ENCODE measurements at regions of chr3 and their contacts with region 1.

Region 1: DNA sequence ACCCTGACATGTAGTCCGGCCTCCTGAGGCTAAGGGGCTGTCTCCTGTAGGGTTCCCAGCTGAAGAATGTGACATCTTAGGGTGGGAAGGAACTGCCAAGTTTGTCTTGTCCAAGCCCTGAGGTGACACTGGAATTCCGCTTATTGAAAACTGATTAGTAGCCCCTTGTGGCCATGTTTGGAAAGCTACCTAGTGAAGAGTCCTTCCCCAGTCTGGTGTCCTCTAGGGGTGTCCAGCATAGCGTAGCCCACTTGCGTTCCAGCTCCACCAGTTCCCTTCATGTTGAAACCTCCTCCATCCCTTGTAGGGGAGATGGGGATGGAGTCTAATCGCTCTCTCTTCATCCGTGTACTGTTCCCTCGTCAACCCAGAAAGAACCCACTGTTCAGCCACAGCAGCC is 79.5 kb downstream of the CHDH start:
- DNase-seq: no peak
- H3K4me3 ChIP-seq: no peak overlapping the region
- H3K27ac ChIP-seq: no peak overlapping the region
- H3K4me1 ChIP-seq: peaks cover 0 to 12% (median 5%) of the 10 kb centered on the region in 4 experiments; a peak in 3 of 7 replicates
- H3K27me3 ChIP-seq: no peaks in the 10 kb centered on the region
- CTCF ChIP-seq: peak; percentile 9 to 26 (median 20)
- EP300 ChIP-seq: no peak
- POLR2A ChIP-seq: no peak
- RAD21 ChIP-seq: peak in 1 of 2 experiments; percentile 3; a peak in 1 of 4 replicates

Region 2: GRCh38 chr3:53721187-53722119 is 45.3 kb before region 1 on chr3:
- CTCF ChIA-PET with region 1: interaction called, 10 read pairs
- POLR2A ChIA-PET with region 1: no interaction called
- DNase-seq: no peak
- H3K4me3 ChIP-seq: no peak overlapping the region
- H3K27ac ChIP-seq: no peak overlapping the region
- H3K4me1 ChIP-seq: peaks cover 0 to 3% (median 0%) of the 10 kb centered on the region in 4 experiments; a peak in 1 of 7 replicates
- H3K27me3 ChIP-seq: no peaks in the 10 kb centered on the region
- CTCF ChIP-seq: peak in 1 of 3 experiments; percentile 23; a peak in 1 of 4 replicates
- EP300 ChIP-seq: no peak
- POLR2A ChIP-seq: no peak
- RAD21 ChIP-seq: peak in 1 of 2 experiments; percentile 23; a peak in 2 of 4 replicates

Region 3: DNA sequence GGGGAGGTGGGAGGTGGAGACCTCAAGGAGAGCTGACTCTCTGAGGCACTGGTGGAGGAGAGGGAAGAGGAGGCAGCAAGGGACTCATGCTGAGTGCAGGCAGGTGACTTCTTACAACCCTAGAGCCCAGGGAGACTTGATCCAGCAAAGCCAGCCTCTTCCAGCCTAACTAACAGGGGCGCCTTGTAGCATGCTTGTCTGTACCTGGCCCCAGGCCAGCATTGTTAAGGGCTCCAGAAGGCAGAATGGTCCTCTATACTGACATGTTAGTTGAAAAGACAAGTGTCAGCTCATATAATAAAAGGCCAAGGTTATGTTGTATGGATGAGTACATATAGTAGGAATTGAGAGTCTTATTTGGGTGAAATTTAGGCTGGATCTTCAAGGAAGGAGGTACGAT is 14.1 kb after region 1 on chr3:
- CTCF ChIA-PET with region 1: interaction called, 10 read pairs
- POLR2A ChIA-PET with region 1: no interaction called
- DNase-seq: no peak
- H3K4me3 ChIP-seq: no peak overlapping the region
- H3K27ac ChIP-seq: no peak overlapping the region
- H3K4me1 ChIP-seq: peaks cover 0 to 2% (median under 1%) of the 10 kb centered on the region in 4 experiments; a peak in 2 of 7 replicates
- H3K27me3 ChIP-seq: no peaks in the 10 kb centered on the region
- CTCF ChIP-seq: no peak
- EP300 ChIP-seq: no peak
- POLR2A ChIP-seq: no peak
- RAD21 ChIP-seq: no peak